ENCODE measurements at regions of chr4 and their contacts with region 1.

Region 1: GRCh38 chr4:1082215-1083182 is 30.9 kb downstream of the RNF212 start:
- DNase-seq: peak; percentile 98
- H3K4me3 Mint-ChIP-seq: peak overlapping the region; percentile 17
- H3K27ac Mint-ChIP-seq: peak overlapping the region; percentile 41
- H3K4me1 Mint-ChIP-seq: peaks cover 25% of the 10 kb centered on the region
- H3K27me3 Mint-ChIP-seq: peaks cover 10% of the 10 kb centered on the region
- CTCF ChIP-seq: no peak

Region 2: GRCh38 chr4:384311-385010 is 698.0 kb before region 1 on chr4:
- CTCF ChIA-PET with region 1: no interaction called
- POLR2A ChIA-PET with region 1: no interaction called
- intact Hi-C with region 1: no loop called
- DNase-seq: no peak
- H3K4me3 Mint-ChIP-seq: no peak overlapping the region
- H3K27ac Mint-ChIP-seq: no peak overlapping the region
- H3K4me1 Mint-ChIP-seq: no peaks in the 10 kb centered on the region
- H3K27me3 Mint-ChIP-seq: no peaks in the 10 kb centered on the region
- CTCF ChIP-seq: no peak

Region 3: GRCh38 chr4:1011022-1011694 is 71.3 kb before region 1 on chr4 and contains the start of gene FGFRL1:
- CTCF ChIA-PET with region 1: no interaction called
- POLR2A ChIA-PET with region 1: interaction called, 4 read pairs
- intact Hi-C with region 1: loop called (anchors 5 kb)
- DNase-seq: peak; percentile 89
- H3K4me3 Mint-ChIP-seq: peak within 1 kb of the TSS; percentile 79
- H3K27ac Mint-ChIP-seq: peak within 1 kb of the TSS; percentile 76
- H3K4me1 Mint-ChIP-seq: peaks cover 11% of the 10 kb centered on the region
- H3K27me3 Mint-ChIP-seq: peaks cover 29% of the 10 kb centered on the region
- CTCF ChIP-seq: no peak
- total RNA-seq, gene FGFRL1: 33.5 and 33.6 TPM in 2 replicates

Region 4: GRCh38 chr4:1043658-1044468 is 38.6 kb before region 1 on chr4:
- CTCF ChIA-PET with region 1: no interaction called
- POLR2A ChIA-PET with region 1: no interaction called
- intact Hi-C with region 1: loop called (anchors 2 kb)
- DNase-seq: peak; percentile 100
- H3K4me3 Mint-ChIP-seq: no peak overlapping the region
- H3K27ac Mint-ChIP-seq: no peak overlapping the region
- H3K4me1 Mint-ChIP-seq: peaks cover 18% of the 10 kb centered on the region
- H3K27me3 Mint-ChIP-seq: no peaks in the 10 kb centered on the region
- CTCF ChIP-seq: no peak

Region 5: GRCh38 chr4:1116838-1117237 is 34.3 kb after region 1 on chr4:
- CTCF ChIA-PET with region 1: interaction called, 4 read pairs
- POLR2A ChIA-PET with region 1: interaction called, 4 read pairs
- intact Hi-C with region 1: loop called (anchors 5 kb)
- DNase-seq: no peak
- H3K4me3 Mint-ChIP-seq: no peak overlapping the region
- H3K27ac Mint-ChIP-seq: no peak overlapping the region
- H3K4me1 Mint-ChIP-seq: no peaks in the 10 kb centered on the region
- H3K27me3 Mint-ChIP-seq: peaks cover 29% of the 10 kb centered on the region
- CTCF ChIP-seq: no peak

Measured in MCF 10A (cell line).